Colonic mucosa (tissue), 4 donors: ENCODE measurements at regions of chr6 and their contacts with region 1.

Region 1: DNA sequence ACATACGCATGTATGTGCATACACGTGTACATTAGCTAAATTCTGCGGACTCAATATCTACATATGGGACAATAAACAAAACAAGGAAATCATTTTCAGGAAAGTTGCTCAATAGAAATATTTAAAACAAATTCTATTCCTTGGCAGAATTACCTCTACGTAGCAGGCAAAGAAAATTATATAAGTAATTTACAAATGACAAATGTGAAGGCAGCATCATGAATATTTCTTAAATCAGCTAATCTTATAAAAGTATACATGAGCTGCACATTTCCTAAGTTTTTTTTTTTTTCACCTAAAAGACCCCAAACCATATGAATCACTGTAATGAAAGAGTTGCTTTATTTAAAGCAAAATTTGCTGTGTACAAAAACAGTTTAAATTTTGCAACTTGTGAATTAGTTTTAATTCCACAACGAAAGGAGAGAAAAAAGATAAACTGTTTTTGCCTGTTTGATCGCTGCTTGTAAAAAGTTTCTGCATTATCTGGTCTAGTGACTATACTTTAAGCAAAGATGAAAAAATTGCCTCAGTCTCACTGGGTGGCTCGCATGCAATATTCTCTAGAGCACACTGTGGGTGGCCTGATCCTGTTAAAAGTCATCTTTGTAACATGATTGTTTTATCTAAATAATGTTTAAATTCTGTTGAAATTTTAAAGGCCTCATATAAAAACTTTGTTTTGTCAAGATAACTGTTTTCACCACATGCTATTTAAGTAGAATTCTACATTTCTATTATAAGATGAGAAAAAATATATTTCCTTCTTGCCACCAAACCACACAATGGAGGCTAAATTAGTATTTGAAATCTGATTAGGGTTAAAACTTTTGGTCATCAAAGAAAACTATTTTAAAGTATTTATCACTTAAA is 57.1 kb downstream of the HUS1B start:
- DNase-seq: no peak
- H3K4me3 ChIP-seq: no peak overlapping the region
- H3K27ac ChIP-seq: no peak overlapping the region
- H3K4me1 ChIP-seq: no peaks in the 10 kb centered on the region
- H3K27me3 ChIP-seq: no peaks in the 10 kb centered on the region
- CTCF ChIP-seq: no peak

Region 2: DNA sequence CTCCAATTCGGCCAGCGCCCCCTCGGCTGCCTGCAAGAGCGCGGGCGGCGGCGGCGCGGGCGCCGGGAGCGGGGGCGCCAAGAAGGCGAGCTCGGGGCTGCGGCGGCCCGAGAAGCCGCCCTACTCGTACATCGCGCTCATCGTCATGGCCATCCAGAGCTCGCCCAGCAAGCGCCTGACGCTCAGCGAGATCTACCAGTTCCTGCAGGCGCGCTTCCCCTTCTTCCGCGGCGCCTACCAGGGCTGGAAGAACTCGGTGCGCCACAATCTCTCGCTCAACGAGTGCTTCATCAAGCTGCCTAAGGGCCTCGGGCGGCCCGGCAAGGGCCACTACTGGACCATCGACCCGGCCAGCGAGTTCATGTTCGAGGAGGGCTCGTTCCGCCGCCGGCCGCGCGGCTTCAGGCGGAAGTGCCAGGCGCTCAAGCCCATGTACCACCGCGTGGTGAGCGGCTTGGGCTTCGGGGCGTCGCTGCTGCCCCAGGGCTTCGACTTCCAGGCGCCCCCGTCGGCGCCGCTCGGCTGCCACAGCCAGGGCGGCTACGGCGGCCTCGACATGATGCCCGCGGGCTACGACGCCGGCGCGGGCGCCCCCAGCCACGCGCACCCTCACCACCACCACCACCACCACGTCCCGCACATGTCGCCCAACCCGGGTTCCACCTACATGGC is 790.5 kb after region 1 on chr6:
- intact Hi-C with region 1: loop called (anchors 5 kb)
- DNase-seq: no peak
- H3K4me3 ChIP-seq: peak overlapping the region; percentile 31
- H3K27ac ChIP-seq: peak overlapping the region; percentile 3
- H3K4me1 ChIP-seq: no peaks in the 10 kb centered on the region
- H3K27me3 ChIP-seq: peaks cover 82% of the 10 kb centered on the region
- CTCF ChIP-seq: no peak